OCI-LY7 (cell line): ENCODE measurements at regions of chr6 and their contacts with region 1.

Region 1: DNA sequence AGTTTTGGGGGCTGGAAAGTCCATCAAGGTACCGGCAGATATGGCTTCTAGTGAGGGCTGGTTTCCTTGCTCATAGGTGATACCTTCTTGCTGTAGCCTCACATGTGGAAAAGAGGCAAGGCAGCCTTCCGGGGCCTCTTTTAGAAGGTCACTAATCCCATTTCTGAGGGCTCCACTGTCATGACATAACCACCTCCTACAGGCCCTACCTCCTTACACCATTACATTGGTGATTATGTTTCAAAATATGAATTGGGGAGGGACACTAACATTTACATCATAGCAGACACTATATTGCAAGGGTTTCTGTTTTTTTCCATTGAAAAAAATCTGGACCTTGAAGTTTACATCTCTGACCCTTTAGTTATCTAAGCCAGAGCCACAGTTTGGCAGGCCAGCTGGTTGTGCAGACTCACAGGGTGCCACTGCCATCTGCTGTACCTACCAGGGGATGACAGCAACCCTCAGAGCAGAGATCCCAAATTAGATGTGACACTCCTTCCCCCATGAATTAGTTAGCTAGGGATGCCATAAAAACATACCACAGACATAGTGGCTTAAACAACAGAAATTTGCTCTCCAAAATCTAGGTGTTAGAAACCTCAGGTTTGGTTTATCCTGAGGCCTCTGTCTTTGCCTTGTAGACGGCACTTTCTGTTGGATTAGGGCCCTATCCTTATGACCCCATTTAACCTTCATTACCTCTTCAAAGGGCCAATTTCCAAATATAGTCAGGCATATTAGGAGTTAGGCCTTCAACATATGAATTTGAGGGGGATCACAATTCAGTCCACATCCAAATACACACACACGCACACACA is 166.4 kb upstream of the RNF217 start:
- DNase-seq: peak; percentile 43
- H3K4me3 ChIP-seq: no peak overlapping the region
- H3K27ac ChIP-seq: no peak overlapping the region
- H3K4me1 ChIP-seq: no peaks in the 10 kb centered on the region
- CTCF ChIP-seq: peak; percentile 73

Region 2: DNA sequence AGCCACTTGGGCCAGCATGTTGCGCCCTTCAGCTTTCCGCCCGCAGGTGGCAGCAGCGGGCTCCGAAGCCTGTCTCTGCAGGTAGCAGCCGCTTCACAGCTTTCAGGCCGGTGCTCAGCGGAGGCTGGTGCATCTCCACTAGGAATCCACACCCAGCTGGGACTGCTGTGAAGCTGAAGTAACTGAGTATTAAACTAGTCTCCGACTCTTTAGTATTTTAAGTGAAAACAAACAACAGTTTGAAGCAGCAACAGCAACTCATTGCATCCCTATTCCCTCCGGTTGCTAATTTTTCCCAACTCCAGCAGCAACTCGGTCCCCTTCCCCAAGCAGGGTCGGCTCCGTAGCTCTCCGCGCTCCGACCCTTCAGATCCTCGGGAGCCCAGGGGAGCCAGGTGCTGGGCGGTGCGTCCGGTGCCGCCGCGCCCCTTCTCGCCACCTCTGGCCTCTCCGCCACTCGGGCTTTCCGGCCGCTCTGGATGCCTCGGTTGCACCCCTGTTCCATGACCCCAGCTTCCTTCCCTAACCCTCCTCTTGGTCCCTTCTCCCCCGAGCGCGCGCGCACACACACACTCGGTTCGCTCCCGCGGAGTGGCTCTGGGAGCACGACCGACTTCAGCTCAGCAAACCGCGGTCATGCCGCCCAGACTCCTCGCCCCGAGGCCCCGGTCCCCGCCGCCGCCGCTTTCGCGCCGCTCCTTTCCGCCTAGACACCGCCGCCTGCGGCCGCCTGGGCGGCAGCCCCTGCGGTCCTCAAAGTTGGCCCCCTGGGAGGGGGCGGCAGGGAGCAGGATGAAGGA is 993.0 kb before region 1 on chr6:
- CTCF ChIA-PET with region 1: no interaction called
- POLR2A ChIA-PET with region 1: no interaction called
- intact Hi-C with region 1: loop called (anchors 1 kb)
- DNase-seq: peak; percentile 54
- H3K4me3 ChIP-seq: no peak overlapping the region
- H3K27ac ChIP-seq: no peak overlapping the region
- H3K4me1 ChIP-seq: no peaks in the 10 kb centered on the region
- CTCF ChIP-seq: peak; percentile 89

Region 3: GRCh38 chr6:123810214-123810613 is 985.6 kb before region 1 on chr6:
- CTCF ChIA-PET with region 1: no interaction called
- POLR2A ChIA-PET with region 1: no interaction called
- intact Hi-C with region 1: loop called (anchors 5 kb)
- DNase-seq: no peak
- H3K4me3 ChIP-seq: no peak overlapping the region
- H3K27ac ChIP-seq: no peak overlapping the region
- H3K4me1 ChIP-seq: no peaks in the 10 kb centered on the region
- CTCF ChIP-seq: no peak

Region 4: DNA sequence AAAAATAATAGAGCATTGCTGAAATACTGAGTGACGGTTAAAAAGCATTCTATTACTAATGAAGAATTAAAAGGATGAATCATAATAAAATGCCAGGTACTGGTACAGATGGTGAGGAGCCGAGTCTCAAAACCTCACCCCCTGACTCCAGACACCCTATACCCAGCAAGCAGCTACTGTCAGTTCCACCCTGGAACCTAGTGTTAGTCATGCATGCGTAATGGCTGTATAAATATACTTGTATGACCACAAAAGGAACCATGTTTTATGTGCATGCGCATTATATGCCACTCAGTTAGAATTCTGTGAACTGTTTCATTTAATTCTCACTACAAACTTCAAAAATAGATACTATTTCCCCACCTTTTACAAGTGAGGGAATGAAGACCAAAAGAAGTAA is 402.3 kb before region 1 on chr6:
- CTCF ChIA-PET with region 1: no interaction called
- POLR2A ChIA-PET with region 1: no interaction called
- intact Hi-C with region 1: loop called (anchors 10 kb)
- DNase-seq: no peak
- H3K4me3 ChIP-seq: no peak overlapping the region
- H3K27ac ChIP-seq: no peak overlapping the region
- H3K4me1 ChIP-seq: no peaks in the 10 kb centered on the region
- CTCF ChIP-seq: no peak

Region 5: GRCh38 chr6:124812067-124812466 is 16.2 kb after region 1 on chr6:
- CTCF ChIA-PET with region 1: no interaction called
- POLR2A ChIA-PET with region 1: no interaction called
- intact Hi-C with region 1: no loop called
- DNase-seq: no peak
- H3K4me3 ChIP-seq: no peak overlapping the region
- H3K27ac ChIP-seq: no peak overlapping the region
- H3K4me1 ChIP-seq: no peaks in the 10 kb centered on the region
- CTCF ChIP-seq: no peak

Region 6: DNA sequence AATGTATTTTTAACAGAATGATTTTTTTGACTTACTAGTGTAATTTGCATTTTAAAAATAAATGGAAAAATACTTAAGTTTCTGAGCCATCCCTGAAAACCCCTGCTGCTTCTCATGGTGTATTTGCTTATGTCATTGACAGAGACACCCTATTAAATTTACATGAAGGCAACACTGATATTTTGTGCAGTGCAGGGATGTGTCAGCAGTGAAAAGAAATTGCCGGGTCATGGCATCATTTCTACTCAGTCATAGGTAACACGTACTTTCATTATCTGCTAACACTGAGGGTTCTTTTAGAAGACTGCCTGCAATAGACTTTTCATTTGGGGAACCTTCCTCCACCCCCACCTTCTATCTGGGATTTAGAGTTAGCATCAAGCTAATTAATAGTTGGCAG is 29.7 kb after region 1 on chr6:
- CTCF ChIA-PET with region 1: no interaction called
- POLR2A ChIA-PET with region 1: no interaction called
- intact Hi-C with region 1: no loop called
- DNase-seq: no peak
- H3K4me3 ChIP-seq: no peak overlapping the region
- H3K27ac ChIP-seq: no peak overlapping the region
- H3K4me1 ChIP-seq: no peaks in the 10 kb centered on the region
- CTCF ChIP-seq: no peak